Sciatic nerve (tissue), 2 donors: ENCODE measurements at regions of chr7 and their contacts with region 1.

Region 1: DNA sequence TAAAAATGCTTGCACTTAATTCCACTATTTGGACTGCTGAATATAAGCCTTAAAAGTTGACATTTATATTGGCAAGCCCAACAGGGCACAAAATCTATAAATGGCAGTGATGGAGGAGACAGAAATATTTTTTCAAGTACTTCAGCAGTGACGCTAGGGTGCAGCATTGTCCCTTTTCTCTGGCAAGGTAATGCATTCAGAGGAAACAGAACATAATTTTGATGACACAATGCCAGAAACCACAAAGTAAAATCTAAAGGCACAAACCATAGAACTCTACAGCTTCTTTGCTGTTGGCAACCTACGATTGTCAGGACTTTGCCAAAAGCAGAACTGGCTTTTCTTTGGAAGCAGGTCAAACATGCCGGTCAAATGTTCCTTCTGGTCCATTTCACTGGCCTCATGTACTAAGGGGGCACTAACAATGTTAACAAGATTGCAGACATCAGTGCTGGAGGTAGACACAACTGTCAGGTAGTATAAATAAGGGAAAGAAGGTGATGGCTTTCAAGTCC is 30.9 kb upstream of the FAM133B start:
- DNase-seq: peak; percentile 76
- ATAC-seq: peak; percentile 92

Region 2: GRCh38 chr7:93055543-93056107 is 434.5 kb after region 1 on chr7:
- intact Hi-C with region 1: loop called (anchors 10 kb)
- DNase-seq: no peak
- ATAC-seq: peak; percentile 56

Region 3: GRCh38 chr7:94374231-94374630 is 1753.1 kb after region 1 on chr7:
- intact Hi-C with region 1: no loop called
- DNase-seq: peak; percentile 91
- ATAC-seq: peak; percentile 94